GM10248 (cell line): ENCODE measurements at regions of chr1 and their contacts with region 1.

Region 1: GRCh38 chr1:29202584-29203340 is 21.1 kb upstream of the SRSF4 start:
- DNase-seq: peak; percentile 87
- CTCF ChIP-seq: peak; percentile 96

Region 2: DNA sequence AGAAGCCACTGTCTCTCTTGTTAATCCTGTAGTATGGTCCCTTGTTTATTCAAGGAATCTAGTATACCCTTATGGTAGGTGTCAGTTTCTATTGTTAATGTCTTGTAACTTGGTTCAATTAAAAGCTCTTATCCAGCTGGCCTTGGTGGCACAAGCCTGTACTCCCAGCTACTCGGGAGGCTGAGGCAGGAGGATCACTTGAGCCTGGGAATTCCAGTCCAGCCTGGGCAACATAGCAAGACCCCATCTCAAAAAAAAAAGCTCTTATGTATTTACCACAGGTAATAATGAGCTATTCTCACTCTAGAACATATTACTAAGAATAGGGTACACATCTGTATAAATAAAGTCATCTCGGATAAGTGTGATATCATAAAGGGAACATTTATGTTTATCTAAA is 125.6 kb before region 1 on chr1:
- CTCF ChIA-PET with region 1: no interaction called
- POLR2A ChIA-PET with region 1: no interaction called
- DNase-seq: no peak
- CTCF ChIP-seq: no peak

Region 3: DNA sequence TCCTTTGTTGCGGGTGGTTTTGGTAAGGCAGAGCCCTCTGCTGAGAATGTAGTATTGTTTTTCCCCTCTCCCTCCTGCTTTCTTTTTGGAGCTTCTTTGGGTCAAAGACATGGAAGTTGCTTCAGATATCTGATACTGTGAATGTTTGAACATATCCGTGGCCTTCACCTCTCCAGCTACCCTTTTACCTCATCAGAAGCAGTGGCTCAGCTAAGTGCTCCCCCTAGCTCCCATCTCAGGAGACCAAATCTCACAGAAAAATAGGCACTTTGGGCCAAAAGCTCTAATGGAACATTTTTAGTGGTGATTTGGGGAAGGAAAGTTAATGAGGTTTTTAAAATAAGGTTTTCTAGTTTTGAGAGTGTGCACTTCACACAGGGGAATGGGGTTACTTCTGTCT is 85.4 kb before region 1 on chr1:
- CTCF ChIA-PET with region 1: interaction called, 10 read pairs
- POLR2A ChIA-PET with region 1: no interaction called
- DNase-seq: no peak
- CTCF ChIP-seq: no peak

Region 4: GRCh38 chr1:29218223-29218622 is 15.5 kb after region 1 on chr1:
- CTCF ChIA-PET with region 1: interaction called, 16 read pairs
- POLR2A ChIA-PET with region 1: no interaction called
- DNase-seq: no peak
- CTCF ChIP-seq: no peak

Region 5: GRCh38 chr1:29383746-29384371 is 181.1 kb after region 1 on chr1:
- CTCF ChIA-PET with region 1: no interaction called
- POLR2A ChIA-PET with region 1: no interaction called
- DNase-seq: no peak
- CTCF ChIP-seq: no peak